B cell (primary cell): ENCODE measurements at regions of chr16 and their contacts with region 1.

Region 1: DNA sequence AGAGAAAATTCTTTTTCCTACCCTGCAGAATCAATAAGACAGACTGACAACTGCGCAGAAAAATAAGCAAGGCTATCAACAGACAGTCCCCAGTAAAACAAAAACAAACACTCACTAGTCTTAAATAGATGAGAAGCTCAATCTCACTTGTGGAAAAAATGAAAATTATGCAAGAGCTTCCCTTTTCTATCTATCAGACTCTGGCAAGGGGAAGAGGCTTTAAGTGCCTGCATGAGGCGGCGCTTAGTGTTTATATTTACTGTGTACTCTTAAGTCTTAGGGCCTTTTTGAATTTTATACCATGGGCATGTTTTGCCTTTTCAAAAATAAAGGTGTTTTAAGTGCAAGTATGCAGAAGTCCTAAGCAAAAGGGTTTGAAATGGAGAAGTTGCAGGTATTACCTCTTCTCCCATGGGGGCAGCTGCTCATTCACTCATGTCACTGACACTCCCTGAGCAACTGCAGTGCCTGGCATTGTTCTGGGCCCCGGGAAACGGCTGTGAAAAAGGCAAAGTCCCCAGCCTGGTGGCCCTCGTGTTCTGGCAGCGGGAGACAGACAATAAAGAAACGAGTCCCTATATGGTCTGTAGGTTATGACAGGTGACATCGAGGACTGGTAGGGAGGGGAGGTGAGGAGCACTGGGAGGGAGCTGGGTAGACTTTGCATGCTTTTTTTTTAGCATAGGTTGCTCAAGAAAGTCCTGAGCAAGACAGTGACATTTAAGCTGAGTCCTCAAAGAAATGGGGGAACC is 35.2 kb downstream of the HSBP1 start:
- DNase-seq: peak; percentile 79
- ATAC-seq: peak; percentile 89
- H3K4me3 ChIP-seq: peak overlapping the region in 3 of 5 experiments; percentile 15 to 47 (median 21)
- H3K4me3 Mint-ChIP-seq: peak overlapping the region; percentile 71
- H3K27ac ChIP-seq: peak overlapping the region; percentile 63 to 65
- H3K27ac Mint-ChIP-seq: peak overlapping the region; percentile 90
- H3K4me1 ChIP-seq: peaks cover 42 to 48% of the 10 kb centered on the region in 2 donors
- H3K4me1 Mint-ChIP-seq: peaks cover 47% of the 10 kb centered on the region
- H3K27me3 ChIP-seq: no peaks in the 10 kb centered on the region
- H3K27me3 Mint-ChIP-seq: peaks cover 3% of the 10 kb centered on the region
- CTCF ChIP-seq: no peak

Region 2: DNA sequence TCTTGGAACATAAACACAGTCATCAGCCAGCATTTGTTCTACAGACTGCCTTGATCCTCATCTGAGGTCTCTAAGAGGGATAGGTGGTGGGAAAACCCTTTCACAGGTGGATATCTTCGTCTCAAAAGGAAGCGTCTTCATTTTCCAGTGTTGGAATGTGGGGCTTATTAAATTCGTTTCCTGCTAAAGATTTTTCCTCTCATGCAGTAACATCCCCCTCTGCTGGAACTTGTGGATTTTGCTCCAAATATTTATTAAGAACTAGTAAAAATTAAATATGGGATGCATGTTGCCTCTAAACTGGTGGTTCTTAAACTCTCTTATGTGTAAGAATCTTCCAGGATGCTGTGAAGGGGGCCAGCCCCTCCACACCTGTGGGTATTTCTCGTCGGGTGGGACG is 35.9 kb after region 1 on chr16:
- CTCF ChIA-PET with region 1: interaction called, 5 read pairs
- POLR2A ChIA-PET with region 1: no interaction called
- intact Hi-C with region 1: loop called (anchors 5 kb)
- DNase-seq: peak; percentile 35
- ATAC-seq: no peak
- H3K4me3 ChIP-seq: no peak overlapping the region
- H3K4me3 Mint-ChIP-seq: no peak overlapping the region
- H3K27ac ChIP-seq: no peak overlapping the region
- H3K27ac Mint-ChIP-seq: no peak overlapping the region
- H3K4me1 ChIP-seq: no peaks in the 10 kb centered on the region
- H3K4me1 Mint-ChIP-seq: no peaks in the 10 kb centered on the region
- H3K27me3 ChIP-seq: peaks cover 0 to 3% (median 0%) of the 10 kb centered on the region in 4 experiments
- H3K27me3 Mint-ChIP-seq: peaks cover 36% of the 10 kb centered on the region
- CTCF ChIP-seq: peak; percentile 52

Region 3: DNA sequence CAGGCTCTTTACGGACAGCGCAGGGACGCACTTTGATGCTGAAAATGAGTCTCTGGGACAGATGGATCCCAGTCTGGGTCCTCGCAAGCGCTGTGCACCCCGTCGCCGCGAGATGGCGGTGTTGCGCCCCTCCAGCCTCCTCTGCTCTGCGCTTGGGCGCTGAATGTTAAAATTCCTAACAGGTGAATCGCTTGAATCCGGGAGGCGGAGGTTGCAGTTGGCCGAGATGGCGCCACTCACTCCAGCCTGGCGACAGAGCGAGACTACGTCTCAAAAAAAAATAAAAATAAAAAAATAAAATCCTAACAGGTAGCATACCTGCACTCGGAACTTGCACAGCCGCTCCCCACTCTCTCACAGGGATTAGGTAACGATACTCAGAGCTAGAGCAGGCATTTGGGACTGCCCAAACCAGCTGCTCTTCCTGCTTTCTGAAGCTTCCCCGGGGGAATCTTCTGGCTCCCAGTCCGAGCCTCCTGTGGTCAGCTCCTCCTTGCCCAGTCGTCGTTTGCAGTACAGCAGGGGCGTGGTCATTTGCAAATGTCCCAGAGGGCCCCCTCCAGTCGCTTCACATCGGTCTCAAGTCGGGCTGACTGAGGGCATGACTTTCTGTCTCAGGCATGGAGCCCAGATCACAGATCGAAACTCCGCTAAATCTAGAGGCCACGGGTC is 83.9 kb after region 1 on chr16:
- CTCF ChIA-PET with region 1: no interaction called
- POLR2A ChIA-PET with region 1: no interaction called
- intact Hi-C with region 1: no loop called
- DNase-seq: peak; percentile 59
- ATAC-seq: peak; percentile 62
- H3K4me3 ChIP-seq: no peak overlapping the region
- H3K4me3 Mint-ChIP-seq: no peak overlapping the region
- H3K27ac ChIP-seq: no peak overlapping the region
- H3K27ac Mint-ChIP-seq: peak overlapping the region; percentile 7
- H3K4me1 ChIP-seq: no peaks in the 10 kb centered on the region
- H3K4me1 Mint-ChIP-seq: no peaks in the 10 kb centered on the region
- H3K27me3 ChIP-seq: no peaks in the 10 kb centered on the region
- H3K27me3 Mint-ChIP-seq: no peaks in the 10 kb centered on the region
- CTCF ChIP-seq: peak; percentile 93

Region 4: GRCh38 chr16:83939266-83939855 is 96.4 kb after region 1 on chr16:
- CTCF ChIA-PET with region 1: no interaction called
- POLR2A ChIA-PET with region 1: no interaction called
- intact Hi-C with region 1: no loop called
- DNase-seq: no peak
- ATAC-seq: no peak
- H3K4me3 ChIP-seq: no peak overlapping the region
- H3K4me3 Mint-ChIP-seq: no peak overlapping the region
- H3K27ac ChIP-seq: no peak overlapping the region
- H3K27ac Mint-ChIP-seq: no peak overlapping the region
- H3K4me1 ChIP-seq: no peaks in the 10 kb centered on the region
- H3K4me1 Mint-ChIP-seq: peaks cover 4% of the 10 kb centered on the region
- H3K27me3 ChIP-seq: no peaks in the 10 kb centered on the region
- H3K27me3 Mint-ChIP-seq: peaks cover 7% of the 10 kb centered on the region
- CTCF ChIP-seq: no peak

Region 5: GRCh38 chr16:84368308-84368996 is 525.5 kb after region 1 on chr16 and contains the start of gene ATP2C2:
- CTCF ChIA-PET with region 1: no interaction called
- POLR2A ChIA-PET with region 1: no interaction called
- intact Hi-C with region 1: no loop called
- DNase-seq: no peak
- ATAC-seq: no peak
- H3K4me3 ChIP-seq: no peak within 1 kb of the TSS
- H3K4me3 Mint-ChIP-seq: no peak within 1 kb of the TSS
- H3K27ac ChIP-seq: no peak within 1 kb of the TSS
- H3K27ac Mint-ChIP-seq: no peak within 1 kb of the TSS
- H3K4me1 ChIP-seq: no peaks in the 10 kb centered on the region
- H3K4me1 Mint-ChIP-seq: peaks cover 5% of the 10 kb centered on the region
- H3K27me3 ChIP-seq: peaks cover 0 to 36% (median 2%) of the 10 kb centered on the region in 4 experiments
- H3K27me3 Mint-ChIP-seq: peaks cover 48% of the 10 kb centered on the region
- CTCF ChIP-seq: no peak
- total RNA-seq, gene ATP2C2: not detected in 2 replicates